ENCODE measurements at regions of chr4 and their contacts with region 1.

Region 1: DNA sequence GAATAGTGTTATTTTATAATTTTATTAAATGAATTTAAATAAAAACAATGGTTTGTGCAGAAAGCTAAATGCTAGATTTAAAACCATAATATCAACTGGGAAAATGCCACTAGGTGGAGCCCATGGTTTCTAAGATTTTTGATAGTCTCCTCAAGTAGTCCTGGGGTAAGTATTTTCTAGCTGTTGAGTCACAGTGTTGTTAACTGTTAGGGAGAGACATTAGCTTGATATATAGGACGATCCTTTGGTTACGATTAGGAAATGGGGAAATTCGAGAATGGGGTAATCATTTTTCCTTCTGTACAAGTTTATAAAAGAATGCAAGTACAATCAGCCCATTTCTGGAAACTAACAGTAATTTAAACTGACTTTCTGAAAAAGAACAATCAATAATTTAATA is 378.4 kb downstream of the ANKRD50 start:
- DNase-seq: no peak
- H3K4me3 ChIP-seq: no peak overlapping the region
- H3K27ac ChIP-seq: no peak overlapping the region
- H3K4me1 ChIP-seq: no peaks in the 10 kb centered on the region
- H3K27me3 ChIP-seq: no peaks in the 10 kb centered on the region
- CTCF ChIP-seq: peak in 6 of 11 experiments; percentile 19 to 49 (median 33)
- POLR2A ChIP-seq: no peak

Region 2: DNA sequence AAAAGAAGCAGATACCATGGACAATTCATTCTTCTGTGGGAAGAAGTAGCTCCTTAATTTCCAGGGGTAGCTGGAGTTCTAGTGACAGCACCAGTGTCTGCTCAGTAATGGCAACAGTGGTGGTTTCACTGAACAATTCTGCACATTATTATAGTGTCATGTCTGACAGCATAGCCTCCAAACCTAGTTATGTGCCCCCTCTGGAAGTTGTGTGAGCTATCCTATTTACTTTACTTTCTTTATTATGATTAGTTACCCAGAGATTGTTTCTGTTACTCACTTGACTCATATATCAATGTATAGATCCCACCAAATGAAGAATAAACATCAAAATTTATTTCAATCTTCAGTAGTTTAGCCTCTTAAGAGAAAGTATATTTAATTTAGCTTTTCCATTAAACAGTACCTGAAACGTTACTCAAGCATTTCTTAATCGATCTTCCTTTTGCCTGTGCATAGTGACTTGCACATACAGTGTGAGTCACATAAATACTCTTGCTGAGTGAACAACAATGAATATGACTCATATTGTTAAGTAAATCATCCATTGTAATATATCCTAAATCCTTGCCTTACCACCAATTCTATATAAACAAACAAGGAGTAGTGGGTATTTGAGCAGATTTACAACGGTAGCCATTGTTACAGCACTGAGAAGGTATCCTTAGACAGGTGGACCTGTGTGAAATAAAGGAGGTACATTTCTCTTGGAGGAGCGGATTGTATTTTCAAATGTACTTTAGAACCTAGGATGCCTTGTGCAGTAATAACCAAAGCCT is 156.3 kb before region 1 on chr4:
- intact Hi-C with region 1: no loop called
- DNase-seq: no peak
- H3K4me3 ChIP-seq: no peak overlapping the region
- H3K27ac ChIP-seq: no peak overlapping the region
- H3K4me1 ChIP-seq: no peaks in the 10 kb centered on the region
- H3K27me3 ChIP-seq: no peaks in the 10 kb centered on the region
- CTCF ChIP-seq: no peak
- POLR2A ChIP-seq: no peak

Region 3: GRCh38 chr4:125283707-125284279 is 949.7 kb after region 1 on chr4:
- intact Hi-C with region 1: loop called (anchors 5 kb)
- DNase-seq: no peak
- H3K4me3 ChIP-seq: no peak overlapping the region
- H3K27ac ChIP-seq: no peak overlapping the region
- H3K4me1 ChIP-seq: no peaks in the 10 kb centered on the region
- H3K27me3 ChIP-seq: no peaks in the 10 kb centered on the region
- CTCF ChIP-seq: peak in 6 of 11 experiments; percentile 8 to 34 (median 25)
- POLR2A ChIP-seq: no peak

Measured in spleen (tissue), 13 donors.